ENCODE measurements at regions of chr6 and their contacts with region 1.

Region 1: GRCh38 chr6:31143148-31143547 is 4.3 kb upstream of the PSORS1C2 start:
- DNase-seq: no peak
- ATAC-seq: no peak
- H3K4me3 ChIP-seq: no peak overlapping the region
- H3K27ac ChIP-seq: no peak overlapping the region
- H3K4me1 ChIP-seq: peaks cover under 1% of the 10 kb centered on the region; the same call in 1 of the 2 replicates
- H3K27me3 ChIP-seq: no peaks in the 10 kb centered on the region
- CTCF ChIP-seq: no peak
- EP300 ChIP-seq: no peak
- POLR2A ChIP-seq: no peak
- RAD21 ChIP-seq: no peak

Region 2: DNA sequence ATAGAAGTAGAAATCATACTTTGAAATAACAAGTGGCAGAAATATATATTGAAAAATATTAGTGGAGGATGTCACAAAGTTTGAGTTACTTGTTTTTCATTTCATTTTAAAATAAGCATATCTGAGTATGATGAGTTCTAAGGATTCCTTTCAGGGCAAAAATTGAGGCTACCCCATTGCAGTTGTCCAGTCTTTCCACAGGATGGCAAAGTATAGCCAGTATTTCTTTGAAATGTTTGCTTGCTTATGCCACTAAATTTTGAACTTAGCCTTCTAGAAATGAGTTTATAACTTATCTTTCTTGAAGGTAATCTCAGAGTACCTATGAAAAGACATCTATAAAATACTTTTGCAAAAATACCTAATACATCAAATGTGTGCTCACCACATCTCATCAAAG is 766.7 kb before region 1 on chr6:
- CTCF ChIA-PET with region 1: no interaction called
- POLR2A ChIA-PET with region 1: interaction called, 10 read pairs
- RAD21 ChIA-PET with region 1: no interaction called
- SMC1A ChIA-PET with region 1: no interaction called
- in situ Hi-C with region 1: no loop called
- intact Hi-C with region 1: no loop called
- DNase-seq: no peak
- ATAC-seq: no peak
- H3K4me3 ChIP-seq: no peak overlapping the region
- H3K27ac ChIP-seq: no peak overlapping the region
- H3K4me1 ChIP-seq: no peaks in the 10 kb centered on the region
- H3K27me3 ChIP-seq: peaks cover 0 to 8% of the 10 kb centered on the region in 2 experiments; a peak in 2 of 4 replicates
- CTCF ChIP-seq: 0 out of 6 replicates have a peak, but pooled peaks of 1 of the 3 experiments have one; percentile 8
- EP300 ChIP-seq: no peak
- POLR2A ChIP-seq: no peak
- RAD21 ChIP-seq: no peak

Region 3: GRCh38 chr6:30963641-30964040 is 179.5 kb before region 1 on chr6:
- CTCF ChIA-PET with region 1: no interaction called
- POLR2A ChIA-PET with region 1: no interaction called
- RAD21 ChIA-PET with region 1: no interaction called
- SMC1A ChIA-PET with region 1: no interaction called
- in situ Hi-C with region 1: no loop called
- intact Hi-C with region 1: no loop called
- DNase-seq: no peak
- ATAC-seq: no peak
- H3K4me3 ChIP-seq: no peak overlapping the region
- H3K27ac ChIP-seq: no peak overlapping the region
- H3K4me1 ChIP-seq: no peaks in the 10 kb centered on the region
- H3K27me3 ChIP-seq: no peaks in the 10 kb centered on the region
- CTCF ChIP-seq: no peak
- EP300 ChIP-seq: no peak
- POLR2A ChIP-seq: no peak
- RAD21 ChIP-seq: no peak

Region 4: GRCh38 chr6:31128093-31128676 is 15.0 kb before region 1 on chr6:
- CTCF ChIA-PET with region 1: interaction called, 13 read pairs
- POLR2A ChIA-PET with region 1: no interaction called
- RAD21 ChIA-PET with region 1: interaction called, 3 read pairs
- SMC1A ChIA-PET with region 1: no interaction called
- in situ Hi-C with region 1: no loop called
- intact Hi-C with region 1: no loop called
- DNase-seq: peak; percentile 13
- ATAC-seq: peak; percentile 81
- H3K4me3 ChIP-seq: no peak overlapping the region
- H3K27ac ChIP-seq: no peak overlapping the region
- H3K4me1 ChIP-seq: no peaks in the 10 kb centered on the region; the same call in 1 of the 2 replicates
- H3K27me3 ChIP-seq: no peaks in the 10 kb centered on the region; a peak in 4 of 4 replicates
- CTCF ChIP-seq: peak; percentile 80 to 90 (median 82)
- EP300 ChIP-seq: no peak
- POLR2A ChIP-seq: no peak
- RAD21 ChIP-seq: peak; percentile 30; the same call in 1 of the 2 replicates

Region 5: DNA sequence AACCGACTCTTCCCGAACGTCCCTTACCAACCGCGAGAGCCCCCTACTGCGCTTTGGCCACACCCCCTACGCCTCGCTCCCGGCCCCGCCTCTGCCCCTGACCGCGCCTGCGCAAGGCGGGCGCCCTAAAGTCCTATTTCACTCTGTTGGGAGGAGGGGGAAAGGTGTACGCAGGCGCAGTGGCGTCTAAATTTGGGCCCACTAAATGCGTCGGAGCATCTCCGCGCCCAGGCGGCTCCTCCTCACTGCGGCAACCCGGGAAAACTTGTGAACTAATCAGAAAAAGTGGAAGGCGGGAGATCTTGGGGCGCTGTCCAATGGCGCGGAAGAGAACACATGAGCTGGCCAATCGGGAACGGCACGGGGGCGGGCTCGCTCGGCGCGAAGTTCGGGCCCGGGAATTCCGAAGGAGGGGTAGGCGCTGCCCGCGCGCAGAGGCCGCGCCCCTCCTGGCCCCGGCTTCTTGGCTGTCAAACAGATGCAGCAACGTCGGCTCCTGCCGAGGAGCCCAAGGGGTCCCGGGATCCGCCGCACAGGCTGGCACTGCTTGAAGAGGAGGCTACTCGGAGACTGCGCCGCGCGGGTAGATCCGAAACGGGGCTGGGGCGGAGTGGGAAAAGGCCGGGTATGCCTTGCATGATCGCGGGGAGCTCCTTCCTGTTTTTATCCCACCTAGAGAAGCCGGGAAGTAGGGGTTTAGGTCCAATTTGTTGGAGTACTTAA is 15.2 kb after region 1 on chr6 and contains the start of gene TCF19:
- CTCF ChIA-PET with region 1: interaction called, 8 read pairs
- POLR2A ChIA-PET with region 1: interaction called, 4 read pairs
- RAD21 ChIA-PET with region 1: no interaction called
- SMC1A ChIA-PET with region 1: interaction called, 12 read pairs
- in situ Hi-C with region 1: no loop called
- intact Hi-C with region 1: no loop called
- DNase-seq: peak; percentile 98
- ATAC-seq: peak; percentile 93
- H3K4me3 ChIP-seq: peak within 1 kb of the TSS; percentile 90
- H3K27ac ChIP-seq: peak within 1 kb of the TSS; percentile 67
- H3K4me1 ChIP-seq: peaks cover 12% of the 10 kb centered on the region
- H3K27me3 ChIP-seq: no peaks in the 10 kb centered on the region
- CTCF ChIP-seq: no peak
- EP300 ChIP-seq: no peak
- POLR2A ChIP-seq: peak; percentile 66
- RAD21 ChIP-seq: no peak
- polyA plus RNA-seq, gene TCF19: 7.7 to 19.5 TPM

Region 6: GRCh38 chr6:31180502-31180901 is 37.4 kb after region 1 on chr6:
- CTCF ChIA-PET with region 1: interaction called, 16 read pairs
- POLR2A ChIA-PET with region 1: no interaction called
- RAD21 ChIA-PET with region 1: no interaction called
- SMC1A ChIA-PET with region 1: interaction called, 4 read pairs
- in situ Hi-C with region 1: no loop called
- intact Hi-C with region 1: no loop called
- DNase-seq: no peak
- ATAC-seq: no peak
- H3K4me3 ChIP-seq: no peak overlapping the region
- H3K27ac ChIP-seq: no peak overlapping the region
- H3K4me1 ChIP-seq: peaks cover 14% of the 10 kb centered on the region
- H3K27me3 ChIP-seq: no peaks in the 10 kb centered on the region
- CTCF ChIP-seq: no peak
- EP300 ChIP-seq: no peak
- POLR2A ChIP-seq: no peak
- RAD21 ChIP-seq: no peak

Region 7: GRCh38 chr6:31252625-31253024 is 109.5 kb after region 1 on chr6:
- CTCF ChIA-PET with region 1: no interaction called
- POLR2A ChIA-PET with region 1: no interaction called
- RAD21 ChIA-PET with region 1: no interaction called
- SMC1A ChIA-PET with region 1: no interaction called
- in situ Hi-C with region 1: no loop called
- intact Hi-C with region 1: no loop called
- DNase-seq: no peak
- ATAC-seq: no peak
- H3K4me3 ChIP-seq: no peak overlapping the region
- H3K27ac ChIP-seq: no peak overlapping the region
- H3K4me1 ChIP-seq: no peaks in the 10 kb centered on the region
- H3K27me3 ChIP-seq: no peaks in the 10 kb centered on the region; a peak in 1 of 4 replicates
- CTCF ChIP-seq: no peak
- EP300 ChIP-seq: no peak
- POLR2A ChIP-seq: no peak
- RAD21 ChIP-seq: no peak